ENCODE measurements at regions of chr16 and their contacts with region 1.

Region 1: DNA sequence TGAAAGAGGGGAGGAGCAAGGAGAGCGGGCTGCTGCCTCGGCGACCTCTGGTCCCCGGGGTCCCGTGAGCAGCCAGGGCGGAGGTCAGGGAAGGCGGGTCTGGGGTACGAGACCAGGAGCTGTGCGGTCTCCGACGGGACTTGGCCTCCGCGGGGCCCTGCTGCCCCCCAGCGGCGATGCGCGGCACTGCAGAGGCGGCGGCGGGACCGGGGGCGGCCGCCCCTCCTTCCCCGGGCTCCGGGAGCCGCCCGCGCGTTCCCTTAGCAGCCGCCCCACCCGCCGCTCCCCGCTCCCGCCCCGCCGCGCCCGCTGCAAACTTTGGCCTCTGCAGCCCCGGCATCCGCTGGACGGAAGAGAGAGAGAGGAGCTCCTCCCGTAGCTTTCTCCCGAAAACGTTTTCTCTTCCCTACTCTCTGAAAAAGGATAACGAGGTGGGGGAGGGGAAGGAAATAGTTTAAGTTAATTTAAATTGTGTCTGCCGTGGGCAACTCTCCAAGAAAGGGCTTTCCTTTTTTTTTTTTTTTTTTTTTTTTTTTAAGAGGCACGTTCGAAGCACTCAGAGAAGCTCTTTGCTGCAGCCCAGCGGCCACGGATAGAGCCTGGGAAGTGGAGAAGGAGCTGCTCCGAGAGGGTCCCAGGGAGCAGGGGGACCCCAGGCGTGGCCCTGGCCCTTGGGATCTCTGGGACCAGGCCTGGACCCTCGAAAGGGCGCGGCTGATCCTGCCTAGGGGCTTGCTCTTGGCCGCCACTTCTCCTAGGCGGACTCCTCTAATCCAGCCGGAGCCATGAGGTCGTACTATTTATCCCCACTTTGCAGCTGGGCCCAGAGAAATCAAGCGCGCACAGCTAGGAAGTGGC is 43.2 kb downstream of the C16orf82 start:
- DNase-seq: peak; percentile 79
- H3K4me3 Mint-ChIP-seq: peak overlapping the region; percentile 52
- H3K27ac Mint-ChIP-seq: no peak overlapping the region
- H3K4me1 Mint-ChIP-seq: peaks cover 2% of the 10 kb centered on the region
- H3K27me3 Mint-ChIP-seq: no peaks in the 10 kb centered on the region

Region 2: GRCh38 chr16:25270577-25270976 is 1839.3 kb before region 1 on chr16:
- CTCF ChIA-PET with region 1: no interaction called
- intact Hi-C with region 1: loop called (anchors 10 kb)
- DNase-seq: no peak
- H3K4me3 Mint-ChIP-seq: no peak overlapping the region
- H3K27ac Mint-ChIP-seq: no peak overlapping the region
- H3K4me1 Mint-ChIP-seq: no peaks in the 10 kb centered on the region
- H3K27me3 Mint-ChIP-seq: no peaks in the 10 kb centered on the region

Region 3: GRCh38 chr16:26963114-26963513 is 146.8 kb before region 1 on chr16:
- CTCF ChIA-PET with region 1: interaction called, 3 read pairs
- intact Hi-C with region 1: loop called (anchors 1 kb)
- DNase-seq: peak; percentile 55
- H3K4me3 Mint-ChIP-seq: no peak overlapping the region
- H3K27ac Mint-ChIP-seq: no peak overlapping the region
- H3K4me1 Mint-ChIP-seq: peaks cover 3% of the 10 kb centered on the region
- H3K27me3 Mint-ChIP-seq: no peaks in the 10 kb centered on the region